Dendritic cell treated with granulocyte-macrophage colony-stimulating factor and Interleukin-4, amounts not matched to agents 40 ng/mL and 50 ng/mL, for 4 days (primary cell): ENCODE measurements at regions of chr13 and their contacts with region 1.

Region 1: GRCh38 chr13:110819203-110820014 is 95.5 kb downstream of the ANKRD10 start:
- H3K4me3 Mint-ChIP-seq: no peak overlapping the region
- H3K27ac Mint-ChIP-seq: no peak overlapping the region
- H3K4me1 Mint-ChIP-seq: no peaks in the 10 kb centered on the region
- H3K27me3 Mint-ChIP-seq: peaks cover 11% of the 10 kb centered on the region

Region 2: DNA sequence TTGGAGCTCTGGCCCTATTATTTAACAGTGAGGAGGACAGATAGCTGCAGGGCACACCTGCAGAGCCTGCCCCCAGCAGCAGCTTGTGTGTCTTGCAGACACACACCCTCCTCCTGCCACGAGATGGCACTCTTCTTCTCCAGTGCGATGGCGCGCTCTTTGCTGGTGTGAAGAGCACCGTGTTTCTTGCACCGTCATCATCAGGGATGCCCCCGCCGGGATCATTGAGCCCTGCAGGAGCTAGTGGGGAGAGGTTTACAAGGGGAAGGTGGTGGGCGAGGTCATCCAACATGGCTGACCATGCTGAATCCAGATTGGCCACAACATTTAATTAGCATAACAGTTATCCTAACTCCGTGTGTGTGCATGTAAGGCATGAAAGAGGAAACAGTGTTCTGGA is 363.5 kb before region 1 on chr13:
- intact Hi-C with region 1: loop called (anchors 5 kb)
- H3K4me3 Mint-ChIP-seq: peak overlapping the region; percentile 33
- H3K27ac Mint-ChIP-seq: no peak overlapping the region
- H3K4me1 Mint-ChIP-seq: peaks cover 11% of the 10 kb centered on the region
- H3K27me3 Mint-ChIP-seq: peaks cover 37% of the 10 kb centered on the region

Region 3: DNA sequence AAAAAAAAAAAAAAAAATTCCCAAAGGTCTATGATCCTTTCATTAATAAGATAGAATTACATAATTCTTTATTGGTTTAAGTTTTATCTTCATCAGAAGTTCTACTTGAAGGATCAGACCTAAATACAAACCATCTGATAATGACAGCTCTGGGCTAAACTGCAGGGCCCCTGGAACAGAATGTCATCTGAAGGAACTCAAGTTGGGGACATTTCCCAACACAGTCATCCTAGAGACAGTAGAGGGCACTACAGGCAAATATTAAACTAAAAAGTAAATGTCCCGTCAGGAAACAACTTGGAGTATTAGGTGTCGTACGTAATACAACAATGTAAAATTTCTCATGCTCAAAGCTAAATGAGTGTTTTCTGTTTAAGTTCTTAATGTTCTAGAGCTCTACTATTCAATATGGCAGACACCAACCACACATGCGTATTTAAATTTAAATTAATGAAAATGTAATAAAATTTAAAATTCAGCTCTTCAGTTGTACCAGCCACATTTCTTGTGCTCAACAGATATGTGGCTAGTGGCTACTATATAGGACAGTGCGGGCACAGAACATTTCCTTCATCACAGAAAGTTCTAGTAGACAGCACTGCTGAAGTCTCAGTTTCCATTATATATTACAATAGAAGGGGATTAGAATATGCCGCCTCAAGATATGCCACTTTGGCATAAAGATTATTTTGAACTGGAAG is 225.8 kb before region 1 on chr13:
- intact Hi-C with region 1: loop called (anchors 1 kb)
- H3K4me3 Mint-ChIP-seq: no peak overlapping the region
- H3K27ac Mint-ChIP-seq: no peak overlapping the region
- H3K4me1 Mint-ChIP-seq: peaks cover 6% of the 10 kb centered on the region
- H3K27me3 Mint-ChIP-seq: peaks cover 1% of the 10 kb centered on the region

Region 4: GRCh38 chr13:110644892-110645521 is 174.4 kb before region 1 on chr13:
- intact Hi-C with region 1: loop called (anchors 1 kb)
- H3K4me3 Mint-ChIP-seq: no peak overlapping the region
- H3K27ac Mint-ChIP-seq: no peak overlapping the region
- H3K4me1 Mint-ChIP-seq: peaks cover 10% of the 10 kb centered on the region
- H3K27me3 Mint-ChIP-seq: no peaks in the 10 kb centered on the region

Region 5: DNA sequence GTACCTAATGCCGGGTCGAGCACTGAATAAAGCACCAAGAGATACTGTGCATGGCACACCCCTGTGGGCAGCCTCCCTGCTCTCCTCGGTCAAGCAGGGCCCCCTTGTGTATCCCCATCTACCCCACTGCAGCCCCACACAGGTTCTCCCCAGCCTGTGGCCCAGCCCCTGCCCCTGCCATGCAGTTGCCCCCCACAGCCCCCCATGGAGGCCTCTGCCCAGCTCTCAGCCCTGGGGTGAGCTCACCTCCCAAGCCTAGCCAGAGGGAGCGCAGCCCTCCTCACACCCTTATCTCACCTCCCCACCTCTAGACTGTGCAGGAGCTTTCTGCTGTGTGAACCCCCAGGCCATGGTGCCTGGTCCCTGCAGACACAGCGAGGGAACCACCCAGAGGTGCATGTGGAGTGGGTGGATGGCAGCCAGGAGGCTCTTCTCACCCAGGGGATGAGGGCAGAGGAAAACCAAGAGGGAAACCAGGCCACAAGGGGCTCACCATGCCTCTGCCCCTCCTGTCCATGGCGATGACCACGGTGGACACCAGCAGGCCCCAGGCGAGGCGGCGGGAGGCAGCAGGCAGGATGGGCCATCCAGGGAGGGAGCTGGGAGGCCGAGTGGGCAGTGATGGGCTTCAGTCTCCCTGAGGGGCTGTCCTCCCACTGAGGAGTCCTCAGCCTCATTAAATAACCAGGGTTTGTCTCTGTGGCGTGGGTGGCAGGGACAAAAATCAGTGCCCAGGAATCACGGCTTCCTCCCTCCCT is 12.2 kb after region 1 on chr13:
- intact Hi-C with region 1: no loop called
- H3K4me3 Mint-ChIP-seq: no peak overlapping the region
- H3K27ac Mint-ChIP-seq: no peak overlapping the region
- H3K4me1 Mint-ChIP-seq: no peaks in the 10 kb centered on the region
- H3K27me3 Mint-ChIP-seq: peaks cover 13% of the 10 kb centered on the region